CD4-positive, alpha-beta T cell (primary cell): ENCODE measurements at regions of chr2 and their contacts with region 1.

Region 1: DNA sequence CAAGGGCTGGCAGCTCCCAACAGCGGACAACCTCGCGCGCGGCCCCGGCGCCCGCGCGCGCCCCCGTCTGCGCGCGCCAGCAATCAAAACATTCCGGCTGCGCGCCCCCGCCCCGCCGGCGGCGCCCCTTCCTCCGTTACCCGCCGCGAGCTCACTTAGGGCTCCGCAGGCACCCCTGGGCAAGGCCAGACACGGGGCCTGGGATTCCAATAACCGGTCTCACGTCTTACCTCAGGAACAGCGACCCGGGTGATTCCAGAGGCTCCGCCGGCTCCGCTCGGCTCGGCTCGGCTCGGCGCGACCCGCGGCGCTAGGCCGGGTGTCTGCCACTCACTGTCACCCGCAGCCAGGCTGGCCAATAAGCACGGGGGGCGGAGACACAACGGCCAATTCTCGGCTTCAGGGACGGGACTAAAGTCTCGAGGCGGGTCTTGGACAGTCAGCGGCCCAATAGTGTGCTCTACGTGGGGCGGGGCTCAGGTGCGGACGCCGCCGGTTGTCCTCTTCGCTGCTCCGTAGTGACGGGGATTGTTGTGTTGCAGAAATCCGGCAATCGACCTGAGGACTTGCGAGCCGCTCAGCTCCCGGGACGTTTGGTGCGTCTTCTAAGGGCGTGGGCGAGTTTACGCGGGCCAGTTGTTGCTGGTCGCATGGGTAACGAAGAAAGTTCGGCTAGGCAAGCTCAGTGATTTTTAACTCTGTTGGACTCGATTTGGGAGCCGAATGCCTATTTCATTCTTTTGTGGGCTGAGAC is at the starts of genes ANKZF1 and ATG9A:
- DNase-seq: peak; percentile 95 to 99 (median 97)
- ATAC-seq: peak; percentile 94
- H3K4me3 ChIP-seq: peak within 1 kb of the TSS; percentile 76
- H3K4me3 Mint-ChIP-seq: peak within 1 kb of the TSS; percentile 96
- H3K27ac ChIP-seq: peak within 1 kb of the TSS; percentile 46 to 91
- H3K27ac Mint-ChIP-seq: peak within 1 kb of the TSS; percentile 99
- H3K4me1 ChIP-seq: peaks cover 49% of the 10 kb centered on the region
- H3K4me1 Mint-ChIP-seq: peaks cover 65% of the 10 kb centered on the region
- H3K27me3 ChIP-seq: no peaks in the 10 kb centered on the region
- H3K27me3 Mint-ChIP-seq: no peaks in the 10 kb centered on the region
- CTCF ChIP-seq: no peak
- total RNA-seq, gene ANKZF1: 128 to 135 TPM
- total RNA-seq, gene ATG9A: 105 to 106 TPM

Region 2: DNA sequence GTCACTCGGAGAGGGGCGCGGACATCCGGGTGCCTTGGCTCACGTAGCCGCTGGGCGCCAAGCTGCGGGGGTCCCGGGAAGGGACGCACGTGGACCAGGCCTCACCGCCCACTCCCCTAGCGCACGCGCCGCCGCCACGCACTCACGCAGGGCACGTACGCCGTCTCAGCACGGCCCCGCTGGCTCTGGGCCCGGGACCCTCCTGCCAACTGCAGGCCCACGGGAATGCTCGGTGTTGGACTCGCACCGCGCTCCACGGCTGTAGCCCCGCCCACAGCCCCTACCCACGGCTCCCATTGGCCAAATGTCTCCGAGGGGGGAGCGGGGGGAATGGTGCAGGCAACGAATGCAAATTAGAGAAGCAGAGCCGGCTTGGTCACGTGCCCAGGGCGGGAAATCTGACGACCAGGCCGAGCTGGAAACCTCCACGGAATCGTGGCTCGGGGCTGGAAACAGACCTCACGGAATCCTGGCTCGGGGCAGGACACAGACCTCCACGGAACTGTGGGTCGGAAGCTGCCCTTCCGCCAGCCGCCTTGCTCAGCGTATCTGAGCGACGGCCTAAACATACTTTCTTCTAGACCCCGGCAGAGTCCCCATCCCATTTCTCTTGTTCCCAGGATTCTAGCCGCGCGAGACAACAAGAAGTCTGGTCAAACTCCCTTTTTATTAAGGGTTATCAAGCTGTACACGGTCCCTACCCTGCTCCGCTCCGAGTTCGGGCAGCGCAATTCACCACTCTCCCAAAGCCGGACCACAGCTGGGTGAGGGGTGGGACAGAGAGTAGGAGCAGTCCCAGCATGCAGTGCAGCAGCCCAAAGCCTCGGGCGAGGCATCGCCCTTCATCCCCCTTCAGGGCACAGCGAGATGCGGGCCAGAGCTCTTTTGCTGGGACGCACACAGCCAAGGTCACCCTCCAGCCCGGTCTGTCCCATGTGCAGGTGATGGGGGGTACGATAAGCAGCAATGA is 10.5 kb before region 1 on chr2 and contains the start of gene ABCB6:
- CTCF ChIA-PET with region 1: no interaction called
- POLR2A ChIA-PET with region 1: interaction called, 49 read pairs
- intact Hi-C with region 1: loop called (anchors 1 kb)
- DNase-seq: peak; percentile 67 to 93 (median 86)
- ATAC-seq: peak; percentile 92
- H3K4me3 ChIP-seq: peak within 1 kb of the TSS; percentile 70
- H3K4me3 Mint-ChIP-seq: peak within 1 kb of the TSS; percentile 85
- H3K27ac ChIP-seq: peak within 1 kb of the TSS in 1 of 2 donors; percentile 56
- H3K27ac Mint-ChIP-seq: peak within 1 kb of the TSS; percentile 78
- H3K4me1 ChIP-seq: peaks cover 26% of the 10 kb centered on the region
- H3K4me1 Mint-ChIP-seq: peaks cover 21% of the 10 kb centered on the region
- H3K27me3 ChIP-seq: no peaks in the 10 kb centered on the region
- H3K27me3 Mint-ChIP-seq: no peaks in the 10 kb centered on the region
- CTCF ChIP-seq: no peak
- total RNA-seq, gene ABCB6: 2.6 to 3.1 TPM

Region 3: GRCh38 chr2:219245148-219245898 is 15.8 kb after region 1 on chr2 and contains the starts of genes GLB1L and STK16:
- CTCF ChIA-PET with region 1: interaction called, 5 read pairs
- POLR2A ChIA-PET with region 1: interaction called, 181 read pairs
- intact Hi-C with region 1: loop called (anchors 1 kb)
- DNase-seq: peak; percentile 73 to 93 (median 84)
- ATAC-seq: peak; percentile 44
- H3K4me3 ChIP-seq: peak within 1 kb of the TSS; percentile 99
- H3K4me3 Mint-ChIP-seq: peak within 1 kb of the TSS; percentile 88
- H3K27ac ChIP-seq: peak within 1 kb of the TSS; percentile 95 to 98
- H3K27ac Mint-ChIP-seq: peak within 1 kb of the TSS; percentile 96
- H3K4me1 ChIP-seq: peaks cover 62% of the 10 kb centered on the region
- H3K4me1 Mint-ChIP-seq: peaks cover 74% of the 10 kb centered on the region
- H3K27me3 ChIP-seq: no peaks in the 10 kb centered on the region
- H3K27me3 Mint-ChIP-seq: no peaks in the 10 kb centered on the region
- CTCF ChIP-seq: no peak
- total RNA-seq, gene GLB1L: 2.4 to 3.0 TPM
- total RNA-seq, gene STK16: 11.2 to 14.1 TPM

Region 4: GRCh38 chr2:219253753-219254590 is 24.5 kb after region 1 on chr2 and contains the start of gene TUBA4A:
- CTCF ChIA-PET with region 1: interaction called, 5 read pairs
- POLR2A ChIA-PET with region 1: interaction called, 181 read pairs
- intact Hi-C with region 1: loop called in 1 of 2 experiments (anchors 1 kb)
- DNase-seq: peak; percentile 83 to 95 (median 90)
- ATAC-seq: peak; percentile 71
- H3K4me3 ChIP-seq: peak within 1 kb of the TSS; percentile 88
- H3K4me3 Mint-ChIP-seq: peak within 1 kb of the TSS; percentile 88
- H3K27ac ChIP-seq: peak within 1 kb of the TSS; percentile 73 to 87
- H3K27ac Mint-ChIP-seq: peak within 1 kb of the TSS; percentile 96
- H3K4me1 ChIP-seq: peaks cover 49% of the 10 kb centered on the region
- H3K4me1 Mint-ChIP-seq: peaks cover 49% of the 10 kb centered on the region
- H3K27me3 ChIP-seq: no peaks in the 10 kb centered on the region
- H3K27me3 Mint-ChIP-seq: no peaks in the 10 kb centered on the region
- CTCF ChIP-seq: no peak
- total RNA-seq, gene TUBA4A: 183 to 185 TPM

Region 5: GRCh38 chr2:219278655-219279516 is 49.4 kb after region 1 on chr2 and contains the start of gene DNAJB2:
- CTCF ChIA-PET with region 1: interaction called, 11 read pairs
- POLR2A ChIA-PET with region 1: interaction called, 34 read pairs
- intact Hi-C with region 1: loop called (anchors 1 kb)
- DNase-seq: peak; percentile 96 to 100 (median 98)
- ATAC-seq: peak; percentile 76
- H3K4me3 ChIP-seq: peak within 1 kb of the TSS; percentile 66
- H3K4me3 Mint-ChIP-seq: peak within 1 kb of the TSS; percentile 97
- H3K27ac ChIP-seq: peak within 1 kb of the TSS; percentile 95 to 97
- H3K27ac Mint-ChIP-seq: peak within 1 kb of the TSS; percentile 98
- H3K4me1 ChIP-seq: peaks cover 43% of the 10 kb centered on the region
- H3K4me1 Mint-ChIP-seq: peaks cover 43% of the 10 kb centered on the region
- H3K27me3 ChIP-seq: no peaks in the 10 kb centered on the region
- H3K27me3 Mint-ChIP-seq: no peaks in the 10 kb centered on the region
- CTCF ChIP-seq: no peak
- total RNA-seq, gene DNAJB2: 151 to 161 TPM